Ovary (tissue), 10 donors: ENCODE measurements at regions of chr9 and their contacts with region 1.

Region 1: GRCh38 chr9:69186841-69187611 is 12.9 kb downstream of the TJP2 start:
- DNase-seq: no peak
- H3K4me3 ChIP-seq: no peak overlapping the region
- H3K27ac ChIP-seq: peak overlapping the region in 1 of 2 donors; percentile 73
- H3K4me1 ChIP-seq: peaks cover 11% of the 10 kb centered on the region
- H3K27me3 ChIP-seq: no peaks in the 10 kb centered on the region
- CTCF ChIP-seq: no peak
- EP300 ChIP-seq: peak; percentile 39
- POLR2A ChIP-seq: no peak

Region 2: GRCh38 chr9:69035438-69036308 is 151.4 kb before region 1 on chr9 and contains the start of gene FXN:
- intact Hi-C with region 1: loop called in 1 of 4 experiments (anchors 5 kb)
- DNase-seq: peak; percentile 77 to 90 (median 84)
- H3K4me3 ChIP-seq: peak within 1 kb of the TSS; percentile 58
- H3K27ac ChIP-seq: peak within 1 kb of the TSS; percentile 68 to 82
- H3K4me1 ChIP-seq: peaks cover 2% of the 10 kb centered on the region
- H3K27me3 ChIP-seq: no peaks in the 10 kb centered on the region
- CTCF ChIP-seq: peak; percentile 91 to 97 (median 96)
- EP300 ChIP-seq: no peak
- POLR2A ChIP-seq: peak; percentile 58
- total RNA-seq, gene FXN: 4.5 to 29.2 (median 21.9) TPM

Region 3: DNA sequence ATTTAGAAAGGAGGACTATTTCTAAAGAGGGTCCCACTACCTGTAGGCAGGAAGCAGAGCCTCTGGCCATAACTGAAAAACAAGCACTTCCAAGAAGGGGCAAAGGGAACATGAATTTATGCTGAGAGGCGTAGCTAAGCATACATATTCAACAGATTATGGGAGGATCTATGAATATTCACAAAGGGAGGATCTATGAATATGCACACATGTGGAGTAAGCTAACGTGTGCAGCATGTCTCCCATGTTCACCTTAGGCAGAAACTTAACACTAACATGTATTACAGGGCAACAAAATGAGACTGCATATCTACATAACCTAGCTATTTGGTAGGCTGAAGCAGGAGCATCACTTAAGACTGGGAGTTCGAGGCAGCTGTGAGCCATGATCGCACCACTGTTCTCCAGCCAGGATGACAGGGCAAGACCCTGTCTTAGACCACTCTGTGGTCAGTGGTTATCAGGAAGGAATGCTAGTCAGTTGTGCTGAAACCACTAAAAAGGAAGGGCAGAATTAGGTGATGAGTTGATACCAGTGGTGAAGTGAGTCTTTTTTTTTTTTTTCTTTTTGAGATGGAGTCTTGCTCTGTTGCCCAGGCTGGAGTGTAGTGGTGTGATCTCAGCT is 130.7 kb before region 1 on chr9:
- intact Hi-C with region 1: loop called (anchors 2 to 5 kb)
- DNase-seq: no peak
- H3K4me3 ChIP-seq: no peak overlapping the region
- H3K27ac ChIP-seq: no peak overlapping the region
- H3K4me1 ChIP-seq: no peaks in the 10 kb centered on the region
- H3K27me3 ChIP-seq: no peaks in the 10 kb centered on the region
- CTCF ChIP-seq: no peak
- EP300 ChIP-seq: no peak
- POLR2A ChIP-seq: no peak

Region 4: DNA sequence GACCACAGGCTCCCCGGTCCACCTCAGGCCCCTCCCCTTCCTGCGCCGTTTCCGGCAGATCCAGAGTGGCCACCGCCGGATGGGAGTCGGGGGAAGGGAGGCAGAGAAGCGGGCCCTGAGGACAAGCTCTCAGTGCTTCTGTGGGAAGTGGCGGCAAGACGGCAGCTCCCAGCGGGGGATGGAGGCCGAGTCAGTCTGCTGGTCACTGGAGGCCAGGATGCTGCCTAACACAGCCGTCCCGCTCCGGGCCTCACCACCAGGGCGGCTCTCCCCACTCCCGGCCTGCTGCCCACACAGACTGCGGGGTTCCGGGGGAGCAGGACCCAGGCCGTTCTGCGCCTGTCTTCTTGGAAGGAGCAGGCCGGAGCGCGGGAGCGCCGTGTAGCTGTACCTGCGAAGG is 120.1 kb before region 1 on chr9:
- intact Hi-C with region 1: loop called in 1 of 4 experiments (anchors 5 kb)
- DNase-seq: no peak
- H3K4me3 ChIP-seq: no peak overlapping the region
- H3K27ac ChIP-seq: no peak overlapping the region
- H3K4me1 ChIP-seq: no peaks in the 10 kb centered on the region
- H3K27me3 ChIP-seq: no peaks in the 10 kb centered on the region
- CTCF ChIP-seq: no peak
- EP300 ChIP-seq: no peak
- POLR2A ChIP-seq: no peak